WTC11 (cell line): ENCODE measurements at regions of chr10 and their contacts with region 1.

Region 1: DNA sequence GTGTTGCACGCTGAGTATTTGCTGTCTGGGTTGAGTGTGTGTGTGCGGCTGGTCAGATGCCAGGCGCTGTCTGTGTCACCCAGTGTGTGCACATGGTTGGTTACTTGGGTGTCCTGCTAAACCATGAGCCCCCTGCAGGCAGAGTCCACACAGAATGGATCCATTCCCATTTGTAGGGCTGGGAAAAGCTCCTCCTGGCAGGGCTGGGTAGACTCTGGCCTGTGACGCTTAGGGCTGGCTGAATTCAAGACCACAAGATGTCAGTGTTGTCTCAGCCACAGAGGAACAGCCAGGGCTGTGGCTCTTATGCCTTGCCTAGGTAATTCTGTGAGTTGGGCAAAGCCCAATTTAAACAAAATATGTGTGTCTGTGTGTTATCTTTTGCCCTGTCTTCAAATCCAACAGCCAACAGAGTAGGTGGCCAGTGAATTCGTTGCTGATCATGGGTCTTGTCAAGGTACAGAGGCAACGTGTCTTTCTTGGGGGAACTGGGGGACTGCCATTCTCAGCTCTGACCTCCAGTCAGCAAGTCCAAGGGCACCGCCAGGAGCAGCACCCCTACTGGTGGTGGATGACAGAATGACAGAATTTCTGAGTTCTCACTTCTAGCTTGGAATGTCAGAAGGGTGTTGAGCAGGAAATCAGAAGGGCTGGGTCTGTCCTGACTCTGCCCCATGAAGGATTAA is 285.1 kb downstream of the CCSER2 start:
- DNase-seq: peak; percentile 75
- ATAC-seq: peak; percentile 99
- H3K4me3 Mint-ChIP-seq: no peak overlapping the region
- H3K27ac Mint-ChIP-seq: peak overlapping the region; percentile 64; the same call in 1 of the 2 replicates
- H3K4me1 Mint-ChIP-seq: peaks cover 18% of the 10 kb centered on the region
- H3K27me3 Mint-ChIP-seq: no peaks in the 10 kb centered on the region
- CTCF ChIP-seq: peak; percentile 22; the same call in 1 of the 2 replicates

Region 2: DNA sequence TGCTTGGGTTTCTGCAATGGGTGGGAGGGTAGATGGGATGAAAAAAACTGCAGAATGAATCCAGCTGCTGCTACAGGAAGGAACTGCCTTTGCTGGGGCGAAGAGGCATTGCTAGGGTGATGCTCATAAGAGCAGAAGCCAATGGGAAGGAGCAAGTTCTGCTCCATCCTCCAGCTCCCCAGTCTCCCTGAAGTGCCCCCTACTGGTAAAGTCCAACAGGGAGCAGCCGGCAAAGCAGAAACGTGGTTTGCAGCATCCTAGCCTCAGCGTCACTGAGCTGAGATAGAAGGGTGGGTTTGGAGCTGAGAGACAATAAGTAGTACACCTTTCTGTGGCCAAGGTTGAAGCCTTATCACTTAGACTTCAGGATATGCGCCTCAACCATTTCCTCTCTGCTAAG is 64.6 kb before region 1 on chr10:
- CTCF ChIA-PET with region 1: interaction called, 48 read pairs
- POLR2A ChIA-PET with region 1: no interaction called
- DNase-seq: peak; percentile 66
- ATAC-seq: peak; percentile 90
- H3K4me3 Mint-ChIP-seq: no peak overlapping the region
- H3K27ac Mint-ChIP-seq: no peak overlapping the region
- H3K4me1 Mint-ChIP-seq: no peaks in the 10 kb centered on the region
- H3K27me3 Mint-ChIP-seq: no peaks in the 10 kb centered on the region; the same call in 1 of the 2 replicates
- CTCF ChIP-seq: peak; percentile 44

Region 3: DNA sequence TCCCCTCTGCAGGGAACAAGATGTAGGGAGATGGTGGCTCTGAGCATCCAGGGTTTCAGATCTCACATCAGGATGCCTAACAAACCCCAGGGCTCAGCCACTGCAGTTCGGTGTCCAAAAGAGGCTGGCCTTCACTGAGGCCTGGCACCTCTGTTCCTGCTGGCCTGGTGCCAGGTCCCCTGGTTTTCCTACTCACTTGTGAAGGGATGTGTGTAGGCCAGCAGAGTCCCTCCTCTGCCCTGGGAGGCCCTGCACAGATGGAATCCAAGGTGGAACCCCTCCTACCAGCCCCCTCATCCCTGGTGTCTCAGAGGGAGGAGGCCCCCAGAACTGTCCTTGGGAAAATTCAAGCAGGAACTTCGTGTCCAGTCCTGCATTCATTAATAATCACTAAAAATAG is 24.5 kb before region 1 on chr10:
- CTCF ChIA-PET with region 1: interaction called, 20 read pairs
- POLR2A ChIA-PET with region 1: no interaction called
- DNase-seq: no peak
- ATAC-seq: no peak
- H3K4me3 Mint-ChIP-seq: no peak overlapping the region
- H3K27ac Mint-ChIP-seq: no peak overlapping the region
- H3K4me1 Mint-ChIP-seq: peaks cover 22% of the 10 kb centered on the region
- H3K27me3 Mint-ChIP-seq: peaks cover 19% of the 10 kb centered on the region
- CTCF ChIP-seq: no peak

Region 4: GRCh38 chr10:84632866-84633265 is 19.4 kb after region 1 on chr10:
- CTCF ChIA-PET with region 1: interaction called, 21 read pairs
- POLR2A ChIA-PET with region 1: interaction called, 6 read pairs
- DNase-seq: no peak
- ATAC-seq: peak; percentile 69
- H3K4me3 Mint-ChIP-seq: no peak overlapping the region
- H3K27ac Mint-ChIP-seq: no peak overlapping the region
- H3K4me1 Mint-ChIP-seq: no peaks in the 10 kb centered on the region
- H3K27me3 Mint-ChIP-seq: no peaks in the 10 kb centered on the region
- CTCF ChIP-seq: no peak

Region 5: DNA sequence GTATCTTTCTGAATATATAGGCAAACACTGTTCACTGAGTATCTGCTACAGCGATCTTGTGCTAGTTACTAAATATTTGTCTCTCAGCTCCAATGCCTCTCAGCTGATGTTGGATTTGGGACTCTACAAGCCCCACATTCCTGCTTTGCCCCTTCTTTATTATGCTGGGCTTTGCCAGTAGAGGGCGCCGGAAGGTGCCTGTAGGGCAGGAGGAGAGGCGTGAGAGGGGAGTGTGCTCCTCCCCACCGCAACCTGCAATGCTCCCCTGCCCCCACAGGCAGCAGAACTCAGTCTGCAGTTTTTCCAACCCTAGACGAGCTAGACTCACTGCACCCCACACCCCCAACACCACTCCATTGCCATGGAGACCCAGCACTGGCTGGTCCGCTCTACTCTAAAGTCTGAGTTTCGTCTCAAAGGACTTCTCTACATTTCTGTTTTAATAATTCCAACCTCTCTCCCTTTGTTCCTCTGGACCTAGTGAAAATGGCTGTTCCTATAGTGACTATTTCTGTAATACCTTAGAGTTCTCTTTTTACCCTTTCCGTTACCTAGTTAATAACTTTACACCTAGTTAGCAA is 52.5 kb after region 1 on chr10:
- CTCF ChIA-PET with region 1: interaction called, 52 read pairs
- POLR2A ChIA-PET with region 1: no interaction called
- DNase-seq: peak; percentile 91
- ATAC-seq: peak; percentile 98
- H3K4me3 Mint-ChIP-seq: no peak overlapping the region
- H3K27ac Mint-ChIP-seq: no peak overlapping the region
- H3K4me1 Mint-ChIP-seq: peaks cover 15% of the 10 kb centered on the region
- H3K27me3 Mint-ChIP-seq: no peaks in the 10 kb centered on the region
- CTCF ChIP-seq: peak; percentile 74

Region 6: GRCh38 chr10:84755311-84755710 is 141.8 kb after region 1 on chr10:
- CTCF ChIA-PET with region 1: interaction called, 10 read pairs
- POLR2A ChIA-PET with region 1: no interaction called
- DNase-seq: no peak
- ATAC-seq: no peak
- H3K4me3 Mint-ChIP-seq: no peak overlapping the region
- H3K27ac Mint-ChIP-seq: no peak overlapping the region
- H3K4me1 Mint-ChIP-seq: peaks cover 6% of the 10 kb centered on the region
- H3K27me3 Mint-ChIP-seq: no peaks in the 10 kb centered on the region
- CTCF ChIP-seq: no peak

Region 7: DNA sequence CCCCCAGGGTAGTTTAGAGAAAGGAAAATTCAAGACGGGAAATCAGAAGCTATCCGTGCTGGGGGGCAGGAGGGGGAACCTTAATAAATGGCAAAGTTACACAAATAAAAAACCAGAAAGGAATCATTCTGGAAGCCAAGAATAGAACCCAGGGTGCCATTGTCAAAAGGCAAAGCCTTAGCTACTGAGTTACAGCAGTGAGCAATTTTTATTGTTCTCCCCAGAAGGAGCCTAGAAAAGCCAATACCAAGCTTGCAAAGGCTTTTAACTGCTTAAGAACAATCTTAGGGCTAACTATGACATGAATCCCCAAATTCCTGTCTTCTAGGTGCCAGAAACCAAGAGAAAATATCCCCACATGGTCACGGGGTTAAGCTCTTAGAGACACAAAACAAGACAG is 197.6 kb after region 1 on chr10:
- CTCF ChIA-PET with region 1: interaction called, 11 read pairs
- POLR2A ChIA-PET with region 1: no interaction called
- DNase-seq: no peak
- ATAC-seq: no peak
- H3K4me3 Mint-ChIP-seq: no peak overlapping the region
- H3K27ac Mint-ChIP-seq: no peak overlapping the region
- H3K4me1 Mint-ChIP-seq: peaks cover 14% of the 10 kb centered on the region
- H3K27me3 Mint-ChIP-seq: no peaks in the 10 kb centered on the region; the same call in 1 of the 2 replicates
- CTCF ChIP-seq: no peak